ENCODE measurements at regions of chr12 and their contacts with region 1.

Region 1: DNA sequence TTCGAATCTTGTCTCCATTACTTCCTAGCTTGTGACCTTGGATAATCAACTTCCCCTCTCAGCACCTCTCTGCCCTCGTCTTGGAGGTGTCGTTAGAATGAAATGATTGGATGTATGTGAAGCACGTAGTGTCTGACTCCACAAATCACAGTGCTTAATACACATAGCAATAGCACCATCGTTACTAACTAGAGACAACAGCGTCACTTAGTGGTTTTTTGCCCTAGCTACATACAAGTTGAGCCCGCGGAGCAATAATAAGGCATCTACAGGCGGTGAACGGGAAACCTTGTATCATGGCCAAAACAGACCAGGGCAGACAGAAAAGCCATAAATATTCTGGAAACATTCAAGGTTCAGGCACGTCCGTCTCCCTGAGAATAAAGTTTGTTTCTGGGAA is 154.9 kb downstream of the ASCL4 start:
- DNase-seq: peak; percentile 40 to 79 (median 68)
- H3K4me3 ChIP-seq: no peak overlapping the region
- H3K27ac ChIP-seq: no peak overlapping the region
- H3K4me1 ChIP-seq: no peaks in the 10 kb centered on the region
- H3K27me3 ChIP-seq: peaks cover 2 to 36% (median 5%) of the 10 kb centered on the region in 5 experiments

Region 2: GRCh38 chr12:107912421-107913004 is 16.9 kb before region 1 on chr12:
- CTCF ChIA-PET with region 1: interaction called, 11 read pairs
- POLR2A ChIA-PET with region 1: no interaction called
- DNase-seq: peak; percentile 78 to 86 (median 79)
- H3K4me3 ChIP-seq: peak overlapping the region in 5 of 7 experiments; percentile 23 to 80 (median 63)
- H3K27ac ChIP-seq: no peak overlapping the region
- H3K4me1 ChIP-seq: peaks cover 0 to 11% (median 6%) of the 10 kb centered on the region in 4 experiments
- H3K27me3 ChIP-seq: peaks cover 4 to 26% (median 10%) of the 10 kb centered on the region in 5 experiments

Region 3: DNA sequence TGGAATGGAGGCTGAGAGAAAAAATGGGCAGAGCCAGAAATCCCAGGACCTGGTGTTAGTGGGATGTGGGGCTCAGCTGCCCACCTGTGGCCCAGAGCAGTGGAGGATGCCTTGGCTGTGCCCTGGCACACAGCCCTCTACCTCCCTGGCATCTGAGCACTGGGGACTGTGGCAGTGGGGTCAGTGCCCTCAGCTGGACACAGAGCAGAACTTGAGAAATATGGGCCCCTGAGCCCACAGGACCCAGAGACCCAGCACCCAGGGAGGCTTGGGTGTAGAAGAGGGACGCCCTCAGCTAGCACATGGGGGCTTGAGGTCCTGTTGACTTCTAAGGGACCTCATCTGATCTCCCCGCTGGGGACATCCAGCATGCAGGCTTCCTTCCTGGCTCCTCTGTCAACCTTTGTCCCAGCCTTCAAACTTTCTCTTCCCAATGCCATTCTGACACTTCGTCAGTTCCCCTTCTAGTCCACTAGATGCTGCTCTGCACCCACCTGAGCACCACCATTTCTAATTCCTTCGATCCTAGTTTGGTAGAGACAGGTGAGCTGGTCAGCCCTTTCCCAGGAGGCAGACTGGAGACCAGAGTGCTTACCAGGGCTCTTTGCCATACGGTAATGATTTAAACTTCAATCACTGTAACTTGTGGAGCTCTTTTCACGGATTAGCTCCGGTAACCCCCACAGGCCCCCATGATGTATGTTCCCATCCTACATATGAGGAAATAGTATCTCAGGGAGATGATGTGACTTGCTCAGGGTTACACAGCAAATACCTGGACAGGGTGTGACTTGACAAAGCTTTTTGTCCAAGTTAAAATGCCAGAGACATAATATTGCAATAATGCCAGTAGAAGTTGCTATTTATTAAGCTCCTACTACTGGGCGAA is 11.3 kb before region 1 on chr12:
- CTCF ChIA-PET with region 1: interaction called, 15 read pairs
- POLR2A ChIA-PET with region 1: no interaction called
- DNase-seq: peak in 2 of 3 donors; percentile 15 to 28
- H3K4me3 ChIP-seq: no peak overlapping the region
- H3K27ac ChIP-seq: no peak overlapping the region
- H3K4me1 ChIP-seq: peaks cover 0 to 2% (median under 1%) of the 10 kb centered on the region in 4 experiments
- H3K27me3 ChIP-seq: peaks cover 0 to 15% (median 12%) of the 10 kb centered on the region in 5 experiments

Region 4: GRCh38 chr12:107967170-107967569 is 37.7 kb after region 1 on chr12:
- CTCF ChIA-PET with region 1: no interaction called
- POLR2A ChIA-PET with region 1: no interaction called
- DNase-seq: peak in 2 of 3 donors; percentile 5 to 20
- H3K4me3 ChIP-seq: no peak overlapping the region
- H3K27ac ChIP-seq: no peak overlapping the region
- H3K4me1 ChIP-seq: no peaks in the 10 kb centered on the region
- H3K27me3 ChIP-seq: peaks cover 0 to 3% (median 0%) of the 10 kb centered on the region in 5 experiments

Region 5: GRCh38 chr12:108029051-108029835 is 99.8 kb after region 1 on chr12:
- CTCF ChIA-PET with region 1: no interaction called
- POLR2A ChIA-PET with region 1: no interaction called
- DNase-seq: no peak
- H3K4me3 ChIP-seq: no peak overlapping the region
- H3K27ac ChIP-seq: no peak overlapping the region
- H3K4me1 ChIP-seq: no peaks in the 10 kb centered on the region
- H3K27me3 ChIP-seq: peaks cover 0 to 25% (median 9%) of the 10 kb centered on the region in 5 experiments

Region 6: DNA sequence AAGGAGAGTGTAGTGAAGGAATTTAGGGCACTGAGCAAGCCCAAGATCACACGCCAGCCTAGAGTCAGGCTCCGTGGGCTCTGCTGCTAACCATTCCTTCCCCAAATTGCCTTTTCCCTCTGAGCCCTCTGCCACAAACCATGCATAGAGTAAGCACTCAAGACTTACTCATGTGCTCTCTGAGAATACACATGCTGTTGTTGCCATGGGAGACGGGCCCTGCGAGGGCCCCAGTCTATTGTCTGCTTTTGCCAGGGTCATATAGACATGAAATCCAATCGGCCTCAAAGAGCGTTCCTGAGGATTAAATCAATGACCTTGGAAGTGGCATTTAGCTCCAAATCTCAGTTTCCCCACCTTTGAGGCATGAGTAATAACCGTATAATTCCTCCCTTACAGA is 150.9 kb after region 1 on chr12:
- CTCF ChIA-PET with region 1: no interaction called
- POLR2A ChIA-PET with region 1: no interaction called
- DNase-seq: no peak
- H3K4me3 ChIP-seq: no peak overlapping the region
- H3K27ac ChIP-seq: no peak overlapping the region
- H3K4me1 ChIP-seq: no peaks in the 10 kb centered on the region
- H3K27me3 ChIP-seq: peaks cover 0 to 29% (median 0%) of the 10 kb centered on the region in 5 experiments

Measured in common myeloid progenitor, CD34-positive (primary cell).